ENCODE measurements at regions of chr16 and their contacts with region 1.

Region 1: GRCh38 chr16:21172650-21173049 is 14.2 kb downstream of the LDAF1 start:
- DNase-seq: no peak
- H3K4me3 Mint-ChIP-seq: no peak overlapping the region
- H3K27ac Mint-ChIP-seq: no peak overlapping the region
- H3K4me1 Mint-ChIP-seq: no peaks in the 10 kb centered on the region
- H3K27me3 Mint-ChIP-seq: no peaks in the 10 kb centered on the region

Region 2: GRCh38 chr16:21554795-21555585 is 382.3 kb after region 1 on chr16:
- intact Hi-C with region 1: loop called (anchors 5 kb)
- DNase-seq: peak; percentile 91
- H3K4me3 Mint-ChIP-seq: peak overlapping the region; percentile 53
- H3K27ac Mint-ChIP-seq: peak overlapping the region; percentile 85
- H3K4me1 Mint-ChIP-seq: peaks cover 12% of the 10 kb centered on the region
- H3K27me3 Mint-ChIP-seq: no peaks in the 10 kb centered on the region

Measured in activated T-helper 2 cell treated with anti-CD3 and anti-CD28 coated beads, Interferon-gamma antibody, Interleukin-2, Interleukin-4, amounts not matched to agents 10 μg/mL and 5 μg/mL and 100 μg/mL, durations not matched to agents 14 hours and 24 hours and 36 hours (primary cell).